Activated CD4-positive, alpha-beta memory T cell treated with anti-CD3 and anti-CD28 coated beads, Interleukin-2, amount 10 ng/mL, durations not matched to agents 7 days and 5 days (primary cell): ENCODE measurements at regions of chr5 and their contacts with region 1.

Region 1: GRCh38 chr5:174418928-174419796 is 305.2 kb upstream of the MSX2 start:
- DNase-seq: peak; percentile 82
- H3K4me3 Mint-ChIP-seq: peak overlapping the region; percentile 10
- H3K27ac Mint-ChIP-seq: no peak overlapping the region
- H3K4me1 Mint-ChIP-seq: peaks cover 2% of the 10 kb centered on the region
- H3K27me3 Mint-ChIP-seq: peaks cover 3% of the 10 kb centered on the region

Region 2: GRCh38 chr5:173823711-173824528 is 595.2 kb before region 1 on chr5:
- CTCF ChIA-PET with region 1: no interaction called
- POLR2A ChIA-PET with region 1: no interaction called
- DNase-seq: no peak
- H3K4me3 Mint-ChIP-seq: no peak overlapping the region
- H3K27ac Mint-ChIP-seq: no peak overlapping the region
- H3K4me1 Mint-ChIP-seq: peaks cover 32% of the 10 kb centered on the region
- H3K27me3 Mint-ChIP-seq: no peaks in the 10 kb centered on the region

Region 3: DNA sequence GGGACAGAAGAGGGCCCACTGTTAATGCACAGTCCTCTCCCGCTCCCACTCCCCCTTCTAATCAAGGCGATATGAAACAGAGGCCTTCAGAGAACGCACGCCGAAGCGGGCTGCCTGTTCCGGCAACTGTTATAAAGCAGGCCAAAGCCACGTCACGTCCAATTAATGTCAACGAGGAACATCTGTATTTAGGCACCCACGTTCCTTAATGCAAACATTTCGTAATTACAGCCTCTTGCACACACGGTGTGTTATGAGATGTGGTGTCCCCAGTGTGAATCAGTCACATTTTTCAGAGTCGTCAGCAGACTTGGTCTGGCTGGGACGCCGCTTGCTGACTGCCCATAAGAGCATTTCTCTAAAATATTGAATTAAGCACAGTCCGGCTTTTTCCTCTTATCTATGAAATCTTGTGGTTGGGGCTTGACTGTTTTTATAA is 34.6 kb before region 1 on chr5:
- CTCF ChIA-PET with region 1: no interaction called
- POLR2A ChIA-PET with region 1: no interaction called
- DNase-seq: no peak
- H3K4me3 Mint-ChIP-seq: no peak overlapping the region
- H3K27ac Mint-ChIP-seq: no peak overlapping the region
- H3K4me1 Mint-ChIP-seq: no peaks in the 10 kb centered on the region
- H3K27me3 Mint-ChIP-seq: no peaks in the 10 kb centered on the region

Region 4: GRCh38 chr5:174402221-174402815 is 16.8 kb before region 1 on chr5:
- CTCF ChIA-PET with region 1: no interaction called
- POLR2A ChIA-PET with region 1: no interaction called
- DNase-seq: no peak
- H3K4me3 Mint-ChIP-seq: no peak overlapping the region
- H3K27ac Mint-ChIP-seq: no peak overlapping the region
- H3K4me1 Mint-ChIP-seq: no peaks in the 10 kb centered on the region
- H3K27me3 Mint-ChIP-seq: peaks cover 1% of the 10 kb centered on the region

Region 5: DNA sequence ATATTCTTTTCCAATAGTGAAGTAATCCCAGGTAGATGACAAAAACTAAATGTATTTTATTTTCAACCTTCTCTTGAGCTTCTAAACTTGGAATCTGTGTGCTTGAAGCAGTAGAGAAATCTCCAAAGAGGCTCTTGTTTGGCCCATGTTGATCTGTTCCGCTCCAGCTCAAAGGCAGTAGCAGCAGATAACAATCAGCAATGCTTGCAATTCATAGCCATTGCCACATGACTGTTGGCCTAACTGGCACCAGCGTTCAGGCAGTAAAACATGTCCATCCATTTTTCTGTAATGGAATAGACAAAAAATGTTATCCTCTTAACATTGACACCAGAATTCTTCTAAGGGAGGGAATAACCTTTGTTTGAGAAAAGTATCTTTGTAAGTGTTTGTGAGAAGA is 34.5 kb after region 1 on chr5:
- CTCF ChIA-PET with region 1: no interaction called
- POLR2A ChIA-PET with region 1: no interaction called
- DNase-seq: no peak
- H3K4me3 Mint-ChIP-seq: peak overlapping the region; percentile 59
- H3K27ac Mint-ChIP-seq: peak overlapping the region; percentile 73
- H3K4me1 Mint-ChIP-seq: peaks cover 18% of the 10 kb centered on the region
- H3K27me3 Mint-ChIP-seq: no peaks in the 10 kb centered on the region

Region 6: GRCh38 chr5:174793684-174794328 is 374.6 kb after region 1 on chr5:
- CTCF ChIA-PET with region 1: interaction called, 57 read pairs
- POLR2A ChIA-PET with region 1: no interaction called
- DNase-seq: peak; percentile 53
- H3K4me3 Mint-ChIP-seq: no peak overlapping the region
- H3K27ac Mint-ChIP-seq: no peak overlapping the region
- H3K4me1 Mint-ChIP-seq: peaks cover 2% of the 10 kb centered on the region
- H3K27me3 Mint-ChIP-seq: peaks cover 7% of the 10 kb centered on the region